ENCODE measurements at regions of chr7 and their contacts with region 1.

Region 1: GRCh38 chr7:138121578-138121977 is 45.3 kb downstream of the AKR1D1 start:
- DNase-seq: no peak
- ATAC-seq: no peak

Region 2: DNA sequence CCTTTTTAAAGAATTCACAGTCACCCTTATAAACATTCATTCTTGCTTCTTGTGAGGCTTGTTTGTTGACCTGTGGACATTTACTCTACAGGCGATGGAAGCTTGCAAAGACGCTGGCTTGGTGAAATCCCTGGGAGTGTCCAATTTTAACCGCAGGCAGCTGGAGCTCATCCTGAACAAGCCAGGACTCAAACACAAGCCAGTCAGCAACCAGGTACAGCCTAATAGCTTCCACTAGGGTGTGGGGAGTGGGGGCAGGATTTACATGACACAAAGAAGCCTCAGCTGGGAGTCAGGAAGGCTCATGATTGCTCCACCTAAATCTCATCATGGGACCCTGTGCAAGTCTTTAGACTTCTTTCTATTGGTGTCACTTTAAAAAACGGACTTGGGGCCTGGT is 16.4 kb before region 1 on chr7:
- intact Hi-C with region 1: loop called (anchors 1 kb)
- DNase-seq: no peak
- ATAC-seq: no peak

Measured in sciatic nerve (tissue), 2 donors.